Activated CD4-positive, alpha-beta memory T cell treated with anti-CD3 and anti-CD28 coated beads for 36 hours (primary cell): ENCODE measurements at regions of chr14 and their contacts with region 1.

Region 1: DNA sequence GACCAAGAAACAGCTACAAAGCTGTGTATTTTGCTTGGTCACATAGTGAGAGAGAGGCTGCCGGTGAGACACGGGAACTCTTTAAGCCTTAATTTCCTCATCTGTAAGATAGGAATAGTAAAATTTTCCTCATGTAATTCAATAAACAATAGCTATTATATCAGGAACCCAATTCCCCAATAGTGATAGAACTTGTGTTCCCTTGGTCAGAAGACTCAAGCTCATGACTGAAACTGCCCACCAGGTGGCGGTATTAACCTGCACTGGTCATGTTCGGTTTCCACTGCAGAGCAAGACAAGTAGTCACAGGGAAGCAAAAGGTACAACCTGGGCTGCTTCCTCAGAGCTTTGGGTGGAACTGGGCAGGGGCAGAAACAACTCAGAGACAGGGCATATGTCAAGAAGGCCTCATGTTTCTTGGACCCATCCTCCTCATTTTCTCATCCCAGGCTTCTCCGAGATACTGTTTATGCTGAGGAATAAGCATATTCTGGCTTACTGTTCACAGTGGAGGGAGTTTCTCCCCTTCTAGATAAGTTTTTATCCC is 4.2 kb upstream of the AJUBA start:
- DNase-seq: peak; percentile 92
- H3K4me3 Mint-ChIP-seq: no peak overlapping the region
- H3K27ac Mint-ChIP-seq: no peak overlapping the region
- H3K4me1 Mint-ChIP-seq: no peaks in the 10 kb centered on the region
- H3K27me3 Mint-ChIP-seq: no peaks in the 10 kb centered on the region

Region 2: GRCh38 chr14:22872033-22872832 is 114.3 kb before region 1 on chr14:
- CTCF ChIA-PET with region 1: interaction called, 4 read pairs
- POLR2A ChIA-PET with region 1: no interaction called
- intact Hi-C with region 1: loop called (anchors 1 kb)
- DNase-seq: peak; percentile 84
- H3K4me3 Mint-ChIP-seq: peak overlapping the region; percentile 88
- H3K27ac Mint-ChIP-seq: peak overlapping the region; percentile 100
- H3K4me1 Mint-ChIP-seq: peaks cover 33% of the 10 kb centered on the region
- H3K27me3 Mint-ChIP-seq: no peaks in the 10 kb centered on the region

Region 3: GRCh38 chr14:22966783-22967269 is 19.8 kb before region 1 on chr14:
- CTCF ChIA-PET with region 1: interaction called, 201 read pairs
- POLR2A ChIA-PET with region 1: no interaction called
- intact Hi-C with region 1: no loop called
- DNase-seq: no peak
- H3K4me3 Mint-ChIP-seq: no peak overlapping the region
- H3K27ac Mint-ChIP-seq: no peak overlapping the region
- H3K4me1 Mint-ChIP-seq: no peaks in the 10 kb centered on the region
- H3K27me3 Mint-ChIP-seq: no peaks in the 10 kb centered on the region

Region 4: DNA sequence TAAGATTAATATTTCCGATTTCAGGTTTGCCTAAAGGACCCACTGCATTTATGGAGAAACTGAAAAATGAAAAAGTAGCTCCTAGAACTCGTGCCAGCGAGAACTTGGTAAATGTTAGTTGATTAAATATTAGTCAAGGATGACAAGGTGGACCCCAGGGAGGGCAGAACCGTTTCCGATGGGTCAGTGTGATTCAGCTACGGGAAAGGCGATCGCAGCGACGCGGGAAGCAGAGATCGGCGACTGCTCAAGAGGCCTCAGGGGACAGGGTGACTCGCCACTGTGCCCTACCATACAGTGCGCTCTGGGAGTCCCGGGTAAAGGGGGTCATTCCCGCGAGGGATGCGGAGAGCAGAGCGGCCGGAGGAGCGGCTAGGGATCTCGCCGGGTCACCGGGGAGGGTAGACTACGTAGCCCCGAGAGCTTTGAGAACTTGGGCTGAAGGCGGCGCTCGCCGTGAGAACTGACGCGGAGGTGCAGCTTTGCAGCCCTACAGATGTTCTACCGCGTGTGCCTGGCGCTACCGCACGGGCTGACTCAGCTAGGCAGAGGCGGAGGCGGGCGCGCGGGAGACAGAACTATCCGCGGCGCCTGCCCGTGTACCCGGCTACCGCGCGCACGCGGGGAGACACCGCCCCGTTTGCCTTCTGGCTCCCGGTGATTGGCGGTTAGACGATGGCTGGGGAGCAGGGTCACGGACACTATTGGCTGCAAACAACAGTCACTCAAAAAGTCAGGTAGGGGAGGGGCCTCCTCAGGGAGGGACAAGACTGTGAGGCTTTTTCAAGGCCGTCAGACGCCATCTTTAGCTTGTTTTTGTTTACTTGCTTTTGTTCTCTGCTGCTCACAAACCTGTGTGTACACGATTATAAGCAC is 20.2 kb after region 1 on chr14:
- CTCF ChIA-PET with region 1: interaction called, 61 read pairs
- POLR2A ChIA-PET with region 1: interaction called, 5 read pairs
- intact Hi-C with region 1: no loop called
- DNase-seq: peak; percentile 99
- H3K4me3 Mint-ChIP-seq: peak overlapping the region; percentile 94
- H3K27ac Mint-ChIP-seq: peak overlapping the region; percentile 96
- H3K4me1 Mint-ChIP-seq: peaks cover 33% of the 10 kb centered on the region
- H3K27me3 Mint-ChIP-seq: no peaks in the 10 kb centered on the region

Region 5: GRCh38 chr14:23041729-23042128 is 55.1 kb after region 1 on chr14:
- CTCF ChIA-PET with region 1: interaction called, 10 read pairs
- POLR2A ChIA-PET with region 1: no interaction called
- intact Hi-C with region 1: no loop called
- DNase-seq: no peak
- H3K4me3 Mint-ChIP-seq: no peak overlapping the region
- H3K27ac Mint-ChIP-seq: no peak overlapping the region
- H3K4me1 Mint-ChIP-seq: no peaks in the 10 kb centered on the region
- H3K27me3 Mint-ChIP-seq: no peaks in the 10 kb centered on the region

Region 6: GRCh38 chr14:23076785-23077408 is 90.3 kb after region 1 on chr14:
- CTCF ChIA-PET with region 1: interaction called, 26 read pairs
- POLR2A ChIA-PET with region 1: no interaction called
- intact Hi-C with region 1: no loop called
- DNase-seq: no peak
- H3K4me3 Mint-ChIP-seq: no peak overlapping the region
- H3K27ac Mint-ChIP-seq: no peak overlapping the region
- H3K4me1 Mint-ChIP-seq: peaks cover 7% of the 10 kb centered on the region
- H3K27me3 Mint-ChIP-seq: no peaks in the 10 kb centered on the region

Region 7: GRCh38 chr14:23478111-23478759 is 491.7 kb after region 1 on chr14:
- CTCF ChIA-PET with region 1: no interaction called
- POLR2A ChIA-PET with region 1: no interaction called
- intact Hi-C with region 1: no loop called
- DNase-seq: peak; percentile 68
- H3K4me3 Mint-ChIP-seq: no peak overlapping the region
- H3K27ac Mint-ChIP-seq: peak overlapping the region; percentile 31
- H3K4me1 Mint-ChIP-seq: peaks cover 2% of the 10 kb centered on the region
- H3K27me3 Mint-ChIP-seq: no peaks in the 10 kb centered on the region